ENCODE measurements at regions of chr5 and their contacts with region 1.

Region 1: DNA sequence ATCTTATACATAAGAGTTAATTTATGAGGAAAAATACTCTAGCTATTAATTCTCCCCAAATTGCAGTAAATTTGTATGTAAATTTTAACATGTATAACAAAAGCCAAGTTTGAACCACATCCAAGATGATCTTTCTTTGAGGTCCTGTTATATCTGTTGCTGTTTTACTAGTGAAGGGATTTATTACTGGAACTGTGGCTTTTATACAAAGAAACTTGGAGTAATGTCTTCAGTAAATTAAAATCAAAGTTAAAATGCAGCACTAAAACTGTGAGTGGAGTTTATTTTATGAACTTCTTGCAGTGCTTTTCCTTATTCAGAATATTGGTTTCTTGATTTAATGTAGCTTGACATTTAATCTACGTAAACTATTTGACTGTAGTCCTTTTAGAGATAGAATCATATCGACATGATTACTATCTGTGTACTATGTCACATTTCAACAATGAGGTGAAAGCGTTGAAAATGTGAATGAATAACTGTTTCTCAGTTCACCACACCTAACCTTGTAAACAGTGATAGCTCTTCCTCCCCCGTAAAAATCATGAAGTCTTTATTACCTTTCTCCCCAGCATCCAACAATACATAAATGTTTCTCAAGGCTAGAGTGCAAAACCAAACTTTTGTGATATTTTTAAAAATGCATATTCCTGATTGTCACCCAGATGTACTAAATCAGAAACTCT is 53.2 kb upstream of the ISOC1 start:
- DNase-seq: no peak
- ATAC-seq: no peak
- H3K4me3 ChIP-seq: no peak overlapping the region
- H3K27ac ChIP-seq: no peak overlapping the region
- H3K4me1 ChIP-seq: no peaks in the 10 kb centered on the region
- H3K27me3 ChIP-seq: no peaks in the 10 kb centered on the region
- CTCF ChIP-seq: no peak
- EP300 ChIP-seq: no peak
- POLR2A ChIP-seq: no peak
- RAD21 ChIP-seq: no peak

Region 2: DNA sequence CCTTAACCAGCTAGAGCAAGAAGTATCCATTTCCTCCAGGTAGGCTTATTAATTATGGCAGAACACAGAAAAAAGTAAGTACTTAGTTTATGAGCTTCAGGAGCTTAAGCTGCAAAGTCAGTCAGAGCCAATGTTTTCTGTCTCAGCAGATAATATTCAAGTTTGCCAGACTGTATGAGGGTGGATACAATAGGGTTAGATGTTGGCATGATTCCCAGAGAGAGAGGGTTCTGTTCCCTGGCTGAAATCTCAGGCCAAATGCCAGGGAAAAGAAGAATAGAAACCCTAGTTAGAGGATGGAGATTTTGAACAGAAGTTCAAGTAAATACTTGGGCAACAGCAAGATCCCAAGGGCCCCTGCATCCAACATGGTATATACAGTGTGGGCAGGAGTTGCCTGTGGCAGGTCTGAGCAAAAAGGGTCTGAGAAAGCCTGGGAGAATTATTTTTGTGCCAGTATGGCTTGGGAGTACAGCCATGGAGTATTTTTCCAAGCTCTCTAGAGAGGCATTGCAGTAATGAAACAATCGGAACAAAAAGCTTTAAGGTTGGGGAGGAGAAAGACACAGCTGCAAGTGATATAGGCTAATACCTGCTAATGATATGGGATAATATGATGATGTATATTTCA is 22.3 kb after region 1 on chr5:
- CTCF ChIA-PET with region 1: no interaction called
- POLR2A ChIA-PET with region 1: no interaction called
- in situ Hi-C with region 1: no loop called
- intact Hi-C with region 1: loop called (anchors 1 kb)
- DNase-seq: no peak
- ATAC-seq: no peak
- H3K4me3 ChIP-seq: no peak overlapping the region
- H3K27ac ChIP-seq: no peak overlapping the region
- H3K4me1 ChIP-seq: no peaks in the 10 kb centered on the region
- H3K27me3 ChIP-seq: no peaks in the 10 kb centered on the region
- CTCF ChIP-seq: no peak
- EP300 ChIP-seq: no peak
- POLR2A ChIP-seq: no peak
- RAD21 ChIP-seq: no peak

Region 3: GRCh38 chr5:129639331-129639730 is 598.0 kb after region 1 on chr5:
- CTCF ChIA-PET with region 1: no interaction called
- POLR2A ChIA-PET with region 1: no interaction called
- in situ Hi-C with region 1: no loop called
- intact Hi-C with region 1: no loop called
- DNase-seq: no peak
- ATAC-seq: no peak
- H3K4me3 ChIP-seq: no peak overlapping the region
- H3K27ac ChIP-seq: no peak overlapping the region
- H3K4me1 ChIP-seq: no peaks in the 10 kb centered on the region
- H3K27me3 ChIP-seq: no peaks in the 10 kb centered on the region; a peak in 1 of 5 replicates
- CTCF ChIP-seq: no peak
- EP300 ChIP-seq: no peak
- POLR2A ChIP-seq: no peak
- RAD21 ChIP-seq: no peak

Measured in HepG2 (cell line).